ENCODE measurements at regions of chr1 and their contacts with region 1.

Region 1: GRCh38 chr1:206912445-206913095 is 9.2 kb downstream of the FCMR start:
- DNase-seq: peak in 5 of 6 donors; percentile 54 to 82 (median 66)
- ATAC-seq: peak; percentile 42 to 62 (median 51)
- H3K4me3 ChIP-seq: no peak overlapping the region
- H3K27ac ChIP-seq: no peak overlapping the region
- H3K4me1 ChIP-seq: peaks cover 0 to 27% (median 7%) of the 10 kb centered on the region in 3 donors
- H3K27me3 ChIP-seq: no peaks in the 10 kb centered on the region
- CTCF ChIP-seq: peak; percentile 70 to 82 (median 81)

Region 2: DNA sequence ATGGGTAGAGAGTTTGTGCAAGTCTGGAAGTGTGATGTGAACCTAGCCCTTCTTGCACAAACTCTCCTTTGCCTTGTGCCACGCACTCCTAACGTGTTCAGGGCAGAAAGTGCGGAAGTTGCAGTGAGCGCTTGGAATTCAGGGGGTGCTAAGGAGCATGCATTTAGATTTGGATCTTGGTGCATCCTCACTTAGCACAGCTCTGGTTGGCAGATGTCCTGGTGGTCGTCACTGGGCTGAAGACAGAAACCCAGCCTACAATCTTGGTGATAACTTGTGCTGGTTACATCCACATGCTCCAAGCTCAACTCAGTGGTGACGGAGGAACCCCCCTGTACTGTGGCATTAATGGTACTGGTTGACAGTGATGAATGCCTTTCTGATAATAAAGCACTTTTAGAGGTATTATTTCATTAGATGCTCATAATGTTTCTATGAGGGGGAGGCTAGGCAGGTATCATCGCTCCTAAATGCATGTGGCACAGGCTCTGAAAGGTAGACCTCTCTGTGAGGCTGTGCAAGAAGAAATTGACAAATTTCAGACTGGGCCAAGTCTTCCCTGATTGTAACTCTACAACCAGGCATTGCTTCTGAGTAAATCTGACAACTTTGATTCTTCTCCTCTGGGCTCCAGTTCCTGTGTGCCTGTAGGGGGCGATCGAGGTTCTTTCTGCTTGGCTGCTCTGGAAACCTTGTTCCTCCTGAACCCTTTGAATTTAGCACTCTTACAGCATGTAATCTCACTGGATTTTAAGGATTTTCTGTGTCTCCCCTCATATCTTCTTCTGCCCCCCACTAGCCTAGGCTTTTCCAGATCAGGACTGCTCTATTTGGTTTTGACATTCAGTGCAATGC is 187.2 kb before region 1 on chr1:
- intact Hi-C with region 1: loop called in 1 of 3 experiments (anchors 5 kb)
- DNase-seq: no peak
- ATAC-seq: peak; percentile 42 to 71 (median 49)
- H3K4me3 ChIP-seq: no peak overlapping the region
- H3K27ac ChIP-seq: no peak overlapping the region
- H3K4me1 ChIP-seq: peaks cover 19 to 43% (median 20%) of the 10 kb centered on the region in 3 donors
- H3K27me3 ChIP-seq: no peaks in the 10 kb centered on the region
- CTCF ChIP-seq: peak; percentile 26 to 48 (median 40)

Region 3: GRCh38 chr1:206734499-206735142 is 177.9 kb before region 1 on chr1:
- intact Hi-C with region 1: loop called in 2 of 3 experiments (anchors 5 kb)
- DNase-seq: peak in 4 of 6 donors; percentile 48 to 84 (median 58)
- ATAC-seq: peak in 3 of 4 donors; percentile 67 to 71 (median 71)
- H3K4me3 ChIP-seq: no peak overlapping the region
- H3K27ac ChIP-seq: no peak overlapping the region
- H3K4me1 ChIP-seq: peaks cover 0 to 8% (median 0%) of the 10 kb centered on the region in 3 donors
- H3K27me3 ChIP-seq: no peaks in the 10 kb centered on the region
- CTCF ChIP-seq: peak; percentile 47 to 69 (median 53)

Region 4: GRCh38 chr1:206856674-206857464 is 55.7 kb before region 1 on chr1:
- intact Hi-C with region 1: no loop called
- DNase-seq: no peak
- ATAC-seq: no peak
- H3K4me3 ChIP-seq: no peak overlapping the region
- H3K27ac ChIP-seq: no peak overlapping the region
- H3K4me1 ChIP-seq: no peaks in the 10 kb centered on the region
- H3K27me3 ChIP-seq: no peaks in the 10 kb centered on the region
- CTCF ChIP-seq: no peak